AG04450 (cell line): ENCODE measurements at regions of chr9 and their contacts with region 1.

Region 1: GRCh38 chr9:113446323-113446740 is 17.2 kb upstream of the RGS3 start:
- DNase-seq: no peak
- H3K4me3 ChIP-seq: no peak overlapping the region
- H3K27ac ChIP-seq: no peak overlapping the region
- H3K27me3 ChIP-seq: no peaks in the 10 kb centered on the region
- CTCF ChIP-seq: peak; percentile 57

Region 2: DNA sequence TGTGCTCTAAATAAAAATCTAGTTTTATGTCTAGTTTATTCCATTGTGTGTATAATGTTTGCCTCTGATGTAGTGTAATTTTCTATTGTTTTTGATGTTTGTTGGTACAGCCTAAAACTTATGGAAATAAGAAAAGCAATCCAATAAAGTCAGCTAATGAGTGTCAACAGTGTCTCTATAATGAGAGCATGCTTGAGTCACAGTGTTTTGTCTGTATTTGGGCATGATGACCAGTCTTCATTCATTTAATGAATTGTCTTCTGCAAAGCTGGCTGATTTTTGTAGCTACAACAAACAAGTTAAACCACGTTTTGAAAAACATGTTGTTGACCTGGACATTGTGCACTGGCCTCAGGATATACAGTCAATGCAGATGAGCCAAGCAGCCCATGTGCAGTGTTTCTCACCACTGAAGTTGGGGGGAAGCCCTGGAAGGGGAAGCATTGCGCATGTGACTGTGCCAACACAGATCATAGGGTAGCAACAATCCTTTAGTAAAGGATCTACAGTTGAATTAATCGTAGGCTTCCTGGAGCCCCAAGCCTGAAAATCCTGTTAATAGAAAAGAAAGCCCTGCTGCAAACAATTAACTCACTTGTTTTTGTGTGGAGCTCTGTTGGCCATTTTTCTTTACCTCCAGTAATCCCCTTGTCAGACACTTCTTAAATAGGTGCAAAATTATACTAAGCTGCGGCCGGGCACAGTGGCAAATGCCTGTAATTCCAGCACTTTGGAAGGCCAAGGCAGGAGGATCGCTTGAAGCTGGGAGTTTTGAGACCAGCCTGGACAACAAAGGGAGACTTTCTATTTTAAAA is 816.5 kb before region 1 on chr9:
- CTCF ChIA-PET with region 1: no interaction called
- POLR2A ChIA-PET with region 1: no interaction called
- DNase-seq: no peak
- H3K4me3 ChIP-seq: no peak overlapping the region
- H3K27ac ChIP-seq: no peak overlapping the region
- H3K27me3 ChIP-seq: no peaks in the 10 kb centered on the region
- CTCF ChIP-seq: no peak

Region 3: GRCh38 chr9:113393281-113393680 is 53.1 kb before region 1 on chr9:
- CTCF ChIA-PET with region 1: no interaction called
- POLR2A ChIA-PET with region 1: no interaction called
- DNase-seq: no peak
- H3K4me3 ChIP-seq: no peak overlapping the region
- H3K27ac ChIP-seq: no peak overlapping the region
- H3K27me3 ChIP-seq: no peaks in the 10 kb centered on the region
- CTCF ChIP-seq: no peak

Region 4: GRCh38 chr9:113648586-113649453 is 202.5 kb after region 1 on chr9:
- CTCF ChIA-PET with region 1: interaction called, 137 read pairs
- POLR2A ChIA-PET with region 1: no interaction called
- DNase-seq: no peak
- H3K4me3 ChIP-seq: no peak overlapping the region
- H3K27ac ChIP-seq: no peak overlapping the region
- H3K27me3 ChIP-seq: no peaks in the 10 kb centered on the region
- CTCF ChIP-seq: 0 out of 2 replicates have a peak, but pooled peaks have one; percentile 5

Region 5: DNA sequence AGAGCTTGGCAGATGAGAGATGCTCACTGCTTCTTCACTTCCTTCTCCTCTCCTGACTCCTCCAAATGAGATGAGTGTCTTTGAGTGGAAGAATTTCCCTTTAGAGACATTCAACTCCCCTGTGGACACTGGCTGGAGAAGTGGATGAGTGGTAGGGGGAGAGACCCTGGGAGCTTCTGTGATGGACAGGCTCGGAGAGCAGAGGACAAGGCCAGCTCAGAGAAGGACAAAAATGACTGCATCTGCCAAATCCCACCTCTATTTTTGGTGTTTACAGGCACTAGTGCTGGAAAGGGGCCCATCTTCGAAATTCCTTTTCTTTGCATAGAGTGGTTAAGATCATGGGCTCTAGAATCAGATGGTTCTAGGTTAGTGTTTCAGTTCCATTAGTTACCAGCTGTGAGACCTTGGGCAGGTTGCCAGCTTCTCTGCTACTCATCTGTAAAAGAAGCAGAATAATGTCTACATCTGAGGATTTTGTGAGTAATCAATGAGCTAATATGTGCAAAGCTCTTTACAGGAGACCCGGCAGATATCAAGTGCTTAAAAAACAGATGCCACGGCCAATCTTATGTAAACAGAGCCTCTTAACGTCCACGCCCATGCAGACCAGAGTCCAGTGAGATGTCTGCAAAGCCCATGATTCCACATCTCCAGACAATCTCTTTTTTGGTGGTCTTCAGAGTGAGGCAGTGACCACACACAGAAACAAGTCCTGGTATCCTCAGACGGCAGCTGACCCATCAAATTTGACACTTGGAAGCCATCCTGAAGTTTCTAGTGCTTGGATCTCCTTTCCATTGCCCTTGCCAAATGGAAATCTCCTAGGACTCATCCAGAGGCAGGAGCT is 695.4 kb after region 1 on chr9:
- CTCF ChIA-PET with region 1: no interaction called
- POLR2A ChIA-PET with region 1: no interaction called
- DNase-seq: no peak
- H3K4me3 ChIP-seq: no peak overlapping the region
- H3K27ac ChIP-seq: peak overlapping the region; percentile 11
- H3K27me3 ChIP-seq: peaks cover 73% of the 10 kb centered on the region
- CTCF ChIP-seq: no peak